Mammary epithelial cell (primary cell): ENCODE measurements at regions of chr15 and their contacts with region 1.

Region 1: GRCh38 chr15:93035953-93036800 is 52.8 kb downstream of the RGMA start:
- DNase-seq: no peak
- H3K4me3 ChIP-seq: no peak overlapping the region
- H3K27ac ChIP-seq: no peak overlapping the region
- H3K4me1 ChIP-seq: peaks cover 3% of the 10 kb centered on the region
- H3K27me3 ChIP-seq: no peaks in the 10 kb centered on the region
- CTCF ChIP-seq: peak; percentile 19 to 39

Region 2: DNA sequence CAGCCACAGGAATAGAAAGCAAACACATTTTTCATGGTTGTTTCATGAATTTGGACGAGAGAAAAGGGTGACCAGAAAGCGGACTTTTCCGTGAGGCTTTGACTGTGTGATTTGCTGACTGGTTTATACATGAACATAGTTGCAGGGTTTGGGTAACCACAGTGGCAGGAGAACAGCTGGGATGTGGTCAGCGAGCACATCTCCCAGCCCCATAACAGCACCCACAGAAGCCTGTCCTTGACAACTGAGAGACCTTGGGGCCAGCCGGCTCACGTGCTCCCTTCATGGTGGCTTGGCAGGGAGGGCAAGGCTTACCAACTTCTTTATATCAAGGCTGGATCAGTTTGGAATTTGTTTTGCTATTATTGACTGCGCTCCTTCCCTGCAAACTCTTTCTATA is 66.0 kb after region 1 on chr15:
- CTCF ChIA-PET with region 1: no interaction called
- dilution Hi-C with region 1: no loop called
- in situ Hi-C with region 1: no loop called
- intact Hi-C with region 1: no loop called
- DNase-seq: no peak
- H3K4me3 ChIP-seq: no peak overlapping the region
- H3K27ac ChIP-seq: no peak overlapping the region
- H3K4me1 ChIP-seq: no peaks in the 10 kb centered on the region
- H3K27me3 ChIP-seq: no peaks in the 10 kb centered on the region
- CTCF ChIP-seq: no peak

Region 3: GRCh38 chr15:93121973-93122910 is 86.1 kb after region 1 on chr15:
- CTCF ChIA-PET with region 1: no interaction called
- dilution Hi-C with region 1: loop called (anchors 5 kb)
- in situ Hi-C with region 1: no loop called
- intact Hi-C with region 1: no loop called
- DNase-seq: no peak
- H3K4me3 ChIP-seq: no peak overlapping the region
- H3K27ac ChIP-seq: no peak overlapping the region
- H3K4me1 ChIP-seq: no peaks in the 10 kb centered on the region
- H3K27me3 ChIP-seq: no peaks in the 10 kb centered on the region
- CTCF ChIP-seq: no peak